ENCODE measurements at regions of chr6 and their contacts with region 1.

Region 1: DNA sequence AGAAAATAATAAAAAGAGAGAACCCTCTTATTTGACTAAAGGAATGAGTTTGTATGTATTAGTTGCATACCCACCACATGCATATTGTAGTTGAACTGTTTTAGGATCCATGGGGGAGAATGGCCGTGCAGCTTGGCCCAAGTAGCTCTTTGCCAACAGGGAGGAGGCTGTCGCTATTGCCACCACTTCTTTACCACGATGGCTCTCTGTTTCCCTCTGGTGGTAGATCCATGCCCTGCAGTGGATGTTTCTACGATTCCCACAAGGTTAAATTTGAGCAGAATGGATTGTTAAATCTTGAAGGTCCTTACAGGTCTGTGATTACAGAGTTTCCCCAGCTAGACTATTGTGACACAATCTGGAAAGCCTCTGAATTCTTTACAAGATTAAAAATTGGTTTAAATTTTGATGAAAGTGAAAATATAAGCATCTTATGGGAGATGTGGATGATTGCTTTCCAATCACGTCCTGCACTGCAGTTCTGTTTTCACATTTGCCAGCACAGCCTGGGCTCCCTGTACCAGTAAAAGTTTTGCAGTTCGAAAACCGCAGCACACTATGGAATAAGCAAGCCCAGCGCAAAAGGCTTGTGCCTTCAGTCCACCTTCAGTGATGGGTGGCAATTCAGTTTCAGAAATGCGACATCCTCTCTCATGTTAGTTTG is 34.4 kb upstream of the FNDC1 start:
- DNase-seq: peak; percentile 56 to 88 (median 72)
- ATAC-seq: peak; percentile 99
- H3K4me3 ChIP-seq: no peak overlapping the region
- H3K4me3 Mint-ChIP-seq: no peak overlapping the region
- H3K27ac ChIP-seq: no peak overlapping the region
- H3K27ac Mint-ChIP-seq: no peak overlapping the region
- H3K4me1 ChIP-seq: peaks cover 5% of the 10 kb centered on the region
- H3K4me1 Mint-ChIP-seq: peaks cover 6% of the 10 kb centered on the region
- H3K27me3 ChIP-seq: no peaks in the 10 kb centered on the region
- H3K27me3 Mint-ChIP-seq: peaks cover 8% of the 10 kb centered on the region
- CTCF ChIP-seq: peak; percentile 98

Region 2: GRCh38 chr6:158704181-158704822 is 430.5 kb before region 1 on chr6:
- CTCF ChIA-PET with region 1: no interaction called
- POLR2A ChIA-PET with region 1: no interaction called
- intact Hi-C with region 1: loop called (anchors 2 kb)
- DNase-seq: peak; percentile 43 to 89 (median 74)
- ATAC-seq: peak; percentile 96
- H3K4me3 ChIP-seq: peak overlapping the region; percentile 44
- H3K4me3 Mint-ChIP-seq: peak overlapping the region; percentile 69
- H3K27ac ChIP-seq: no peak overlapping the region
- H3K27ac Mint-ChIP-seq: no peak overlapping the region
- H3K4me1 ChIP-seq: peaks cover 17% of the 10 kb centered on the region
- H3K4me1 Mint-ChIP-seq: peaks cover 6% of the 10 kb centered on the region
- H3K27me3 ChIP-seq: no peaks in the 10 kb centered on the region
- H3K27me3 Mint-ChIP-seq: no peaks in the 10 kb centered on the region
- CTCF ChIP-seq: peak; percentile 99

Region 3: DNA sequence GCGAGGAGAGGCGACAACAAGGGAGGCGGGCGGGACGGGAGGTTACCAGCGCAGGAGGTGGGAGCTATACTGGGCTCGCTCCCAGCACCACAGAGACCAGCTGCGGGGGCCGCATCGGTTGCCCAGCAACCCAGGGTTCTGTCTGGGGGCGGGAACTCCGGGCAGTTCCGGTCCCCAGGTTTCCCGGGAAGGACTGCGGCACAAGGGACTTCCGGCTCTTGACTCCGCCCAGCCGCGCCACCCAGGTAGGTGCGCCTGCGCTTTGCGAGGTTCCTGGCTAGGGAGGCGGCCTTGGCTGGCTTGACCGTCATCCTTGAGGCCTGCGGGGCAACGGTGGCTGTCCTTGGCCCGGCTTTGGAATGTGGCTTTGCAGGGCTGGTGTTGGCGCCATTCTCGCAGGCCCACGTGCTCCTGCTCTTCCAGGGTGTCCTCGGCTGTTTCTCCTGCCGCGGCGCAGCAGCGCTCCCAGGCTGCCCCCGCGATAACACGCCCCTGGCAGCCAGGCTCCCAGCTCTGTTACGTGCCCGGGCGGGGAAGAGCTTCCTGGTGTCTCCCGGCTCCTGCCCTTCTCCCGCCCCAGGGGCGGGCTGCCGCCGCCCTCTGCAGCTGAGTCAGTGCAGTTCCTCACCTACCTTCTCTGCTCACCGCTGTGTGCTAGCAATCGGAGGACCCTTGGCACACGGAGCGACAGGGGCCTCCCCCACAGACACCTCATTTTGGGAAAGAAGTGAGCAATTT is 135.0 kb before region 1 on chr6 and contains the start of gene RSPH3:
- CTCF ChIA-PET with region 1: interaction called, 12 read pairs
- POLR2A ChIA-PET with region 1: interaction called, 3 read pairs
- intact Hi-C with region 1: no loop called
- DNase-seq: peak; percentile 70 to 93 (median 84)
- ATAC-seq: peak; percentile 87
- H3K4me3 ChIP-seq: peak within 1 kb of the TSS; percentile 94
- H3K4me3 Mint-ChIP-seq: peak within 1 kb of the TSS; percentile 97
- H3K27ac ChIP-seq: peak within 1 kb of the TSS; percentile 50 to 55
- H3K27ac Mint-ChIP-seq: peak within 1 kb of the TSS; percentile 80
- H3K4me1 ChIP-seq: peaks cover 9% of the 10 kb centered on the region
- H3K4me1 Mint-ChIP-seq: peaks cover 23% of the 10 kb centered on the region
- H3K27me3 ChIP-seq: no peaks in the 10 kb centered on the region
- H3K27me3 Mint-ChIP-seq: no peaks in the 10 kb centered on the region
- CTCF ChIP-seq: no peak
- total RNA-seq, gene RSPH3: 0.59 to 1.1 TPM

Region 4: GRCh38 chr6:159008656-159009288 is 126.1 kb before region 1 on chr6:
- CTCF ChIA-PET with region 1: interaction called, 86 read pairs
- POLR2A ChIA-PET with region 1: interaction called, 28 read pairs
- intact Hi-C with region 1: loop called (anchors 1 kb)
- DNase-seq: peak in 4 of 14 experiments; percentile 22 to 79 (median 77)
- ATAC-seq: peak; percentile 83
- H3K4me3 ChIP-seq: peak overlapping the region; percentile 23
- H3K4me3 Mint-ChIP-seq: peak overlapping the region; percentile 39
- H3K27ac ChIP-seq: no peak overlapping the region
- H3K27ac Mint-ChIP-seq: no peak overlapping the region
- H3K4me1 ChIP-seq: peaks cover 29% of the 10 kb centered on the region
- H3K4me1 Mint-ChIP-seq: peaks cover 47% of the 10 kb centered on the region
- H3K27me3 ChIP-seq: no peaks in the 10 kb centered on the region
- H3K27me3 Mint-ChIP-seq: no peaks in the 10 kb centered on the region
- CTCF ChIP-seq: peak; percentile 85

Region 5: DNA sequence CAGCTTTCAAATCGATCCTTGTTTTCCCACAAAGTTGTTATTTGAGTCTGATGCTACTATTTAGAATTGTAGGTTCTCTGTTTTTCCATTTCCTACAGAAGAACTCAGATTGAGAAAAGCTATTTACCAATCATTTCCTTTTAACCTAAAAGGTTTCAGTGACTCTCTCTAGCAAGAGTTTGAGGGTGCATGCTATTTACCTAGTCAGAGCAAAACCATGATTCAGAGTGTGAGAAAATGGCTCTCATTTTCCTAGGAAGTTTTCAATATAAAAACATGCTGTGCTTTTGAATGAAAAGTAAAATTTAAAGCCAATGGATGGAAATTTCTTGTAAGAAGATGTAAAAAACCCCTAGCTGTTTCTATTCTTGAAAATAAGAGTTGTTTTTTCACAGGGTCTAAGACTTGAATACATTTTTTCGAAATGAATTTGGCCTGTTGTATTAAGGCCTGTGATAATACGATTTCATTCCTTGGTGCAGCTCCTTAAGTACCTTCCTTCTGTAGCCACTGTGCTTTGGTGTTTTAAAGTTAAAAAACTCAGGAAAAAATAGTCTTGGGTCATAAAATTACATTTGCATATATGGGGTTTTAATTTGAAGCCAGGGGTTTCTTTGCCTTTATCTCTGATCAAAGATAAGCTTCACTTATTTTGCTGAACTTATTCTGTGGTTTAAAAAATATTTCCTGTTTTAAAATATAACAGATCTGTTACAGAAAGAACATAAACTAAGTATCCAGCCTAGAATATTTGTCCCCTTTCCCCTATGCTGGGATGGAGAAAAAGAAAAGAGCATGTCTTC is 116.9 kb before region 1 on chr6:
- CTCF ChIA-PET with region 1: interaction called, 23 read pairs
- POLR2A ChIA-PET with region 1: interaction called, 3 read pairs
- intact Hi-C with region 1: no loop called
- DNase-seq: peak in 1 of 14 experiments; percentile 34
- ATAC-seq: no peak
- H3K4me3 ChIP-seq: no peak overlapping the region
- H3K4me3 Mint-ChIP-seq: peak overlapping the region; percentile 46
- H3K27ac ChIP-seq: peak overlapping the region; percentile 9 to 57
- H3K27ac Mint-ChIP-seq: peak overlapping the region; percentile 45
- H3K4me1 ChIP-seq: peaks cover 44% of the 10 kb centered on the region
- H3K4me1 Mint-ChIP-seq: peaks cover 57% of the 10 kb centered on the region
- H3K27me3 ChIP-seq: no peaks in the 10 kb centered on the region
- H3K27me3 Mint-ChIP-seq: no peaks in the 10 kb centered on the region
- CTCF ChIP-seq: no peak

Region 6: DNA sequence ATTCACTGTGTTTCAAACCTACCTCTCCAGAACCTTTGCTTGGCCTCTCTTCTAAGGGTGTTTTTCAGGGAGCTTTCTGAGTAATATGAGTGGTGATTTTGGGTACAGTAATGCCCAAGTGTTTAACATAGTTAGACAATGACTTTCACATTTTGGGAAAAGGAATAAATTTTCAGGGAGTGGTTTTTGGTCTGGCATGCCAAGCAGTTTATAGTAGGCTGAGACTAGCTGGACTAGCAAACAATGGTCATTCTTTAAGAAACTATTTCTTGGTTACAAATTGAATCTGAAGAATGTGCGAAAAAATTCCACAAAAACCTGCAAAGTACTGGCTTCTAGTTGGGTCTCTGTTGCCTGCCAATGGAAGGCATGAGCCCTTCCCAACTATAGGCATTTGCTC is 49.7 kb after region 1 on chr6:
- CTCF ChIA-PET with region 1: no interaction called
- POLR2A ChIA-PET with region 1: no interaction called
- intact Hi-C with region 1: no loop called
- DNase-seq: no peak
- ATAC-seq: no peak
- H3K4me3 ChIP-seq: no peak overlapping the region
- H3K4me3 Mint-ChIP-seq: no peak overlapping the region
- H3K27ac ChIP-seq: no peak overlapping the region
- H3K27ac Mint-ChIP-seq: no peak overlapping the region
- H3K4me1 ChIP-seq: peaks cover 12% of the 10 kb centered on the region
- H3K4me1 Mint-ChIP-seq: peaks cover 8% of the 10 kb centered on the region
- H3K27me3 ChIP-seq: no peaks in the 10 kb centered on the region
- H3K27me3 Mint-ChIP-seq: peaks cover 8% of the 10 kb centered on the region
- CTCF ChIP-seq: no peak

Region 7: GRCh38 chr6:159196430-159196975 is 61.7 kb after region 1 on chr6:
- CTCF ChIA-PET with region 1: no interaction called
- POLR2A ChIA-PET with region 1: no interaction called
- intact Hi-C with region 1: no loop called
- DNase-seq: no peak
- ATAC-seq: no peak
- H3K4me3 ChIP-seq: no peak overlapping the region
- H3K4me3 Mint-ChIP-seq: no peak overlapping the region
- H3K27ac ChIP-seq: no peak overlapping the region
- H3K27ac Mint-ChIP-seq: no peak overlapping the region
- H3K4me1 ChIP-seq: no peaks in the 10 kb centered on the region
- H3K4me1 Mint-ChIP-seq: no peaks in the 10 kb centered on the region
- H3K27me3 ChIP-seq: peaks cover 0 to 10% of the 10 kb centered on the region in 2 experiments
- H3K27me3 Mint-ChIP-seq: peaks cover 41% of the 10 kb centered on the region
- CTCF ChIP-seq: no peak